Left ventricle myocardium superior (tissue), 1 donor: ENCODE measurements at regions of chr1 and their contacts with region 1.

Region 1: DNA sequence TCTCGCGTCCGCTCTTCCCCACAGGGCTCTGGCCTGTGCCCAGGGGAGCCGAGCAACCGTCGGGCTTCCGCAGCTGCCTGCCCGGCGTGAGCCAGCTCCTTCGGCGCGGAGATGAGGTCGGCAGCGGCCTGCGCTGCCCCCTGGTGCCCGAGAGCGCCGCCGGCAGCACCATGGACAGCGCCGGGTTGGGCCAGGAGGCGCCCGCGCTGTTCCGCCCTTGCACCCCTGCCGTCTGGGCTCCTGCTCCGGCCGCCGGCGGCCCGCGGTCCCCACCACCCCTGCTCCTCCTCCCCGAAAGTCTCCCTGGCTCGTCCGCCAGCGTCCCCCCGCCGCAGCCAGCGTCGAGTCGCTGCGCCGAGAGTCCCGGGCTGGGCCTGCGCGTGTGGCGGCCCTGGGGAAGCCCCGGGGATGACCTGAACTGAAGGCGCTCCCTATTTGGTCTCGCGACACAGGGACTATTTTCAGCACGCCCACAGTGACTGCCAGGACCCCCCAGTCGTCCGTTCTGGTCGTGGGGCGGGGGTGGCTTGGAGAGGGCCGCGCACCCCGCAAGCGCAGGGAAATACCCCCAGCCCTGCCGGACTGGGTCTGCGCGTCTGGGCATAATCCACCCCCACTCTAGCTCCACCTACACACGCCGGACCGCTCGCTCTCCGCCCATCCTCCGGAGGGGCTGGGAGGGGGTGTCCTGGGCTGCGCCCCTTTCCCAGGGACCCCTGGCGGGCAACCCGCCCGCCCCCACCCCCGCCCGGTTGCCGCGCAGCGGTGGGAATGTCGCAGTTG is 1.3 kb downstream of the HES3 start:
- DNase-seq: peak; percentile 90
- ATAC-seq: peak; percentile 80

Region 2: DNA sequence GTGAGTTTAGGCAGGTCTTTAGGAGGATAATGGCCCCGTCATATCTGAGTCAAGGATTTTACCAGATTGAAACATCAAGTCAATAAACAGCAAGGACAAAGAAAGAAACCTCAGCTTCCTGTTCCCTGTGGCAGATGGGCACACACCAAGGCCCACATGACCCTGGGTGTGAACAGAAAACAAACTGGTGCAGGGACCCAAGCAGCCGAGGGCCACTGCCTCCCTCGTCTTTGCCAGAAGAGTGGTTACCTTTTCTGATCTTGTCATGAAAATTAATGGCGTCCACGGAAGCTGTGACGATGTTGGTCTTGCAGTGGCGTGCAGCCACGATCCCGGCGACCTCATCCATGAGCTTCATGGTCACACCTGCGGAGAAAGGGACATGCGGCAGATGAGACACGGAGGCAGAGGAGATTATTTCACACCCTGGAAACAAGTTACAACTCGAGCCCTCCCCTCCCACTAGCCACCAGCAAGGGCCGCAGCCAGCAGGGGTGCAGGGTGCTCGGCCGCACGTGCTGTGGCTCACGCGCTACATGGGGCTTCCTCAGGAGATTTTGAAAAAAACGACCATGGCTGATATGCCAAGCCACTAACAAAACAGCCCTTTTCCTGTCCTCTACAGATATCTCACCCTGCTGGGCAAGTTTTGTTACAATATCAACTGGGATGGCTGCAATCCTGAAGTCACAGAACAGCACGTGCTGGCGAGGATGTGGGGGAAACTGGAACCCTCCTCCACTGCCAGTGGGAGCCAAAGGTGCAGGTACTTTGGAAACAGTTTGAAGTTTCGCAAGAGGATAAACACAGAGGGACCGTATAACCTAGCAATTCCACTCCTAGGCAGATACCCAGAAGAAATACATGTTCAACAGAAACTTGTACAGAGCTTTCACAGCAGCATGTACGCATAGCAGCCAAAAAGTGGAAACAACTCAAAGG is 49.6 kb after region 1 on chr1:
- intact Hi-C with region 1: no loop called
- DNase-seq: no peak
- ATAC-seq: no peak

Region 3: GRCh38 chr1:6343506-6344405 is 98.5 kb after region 1 on chr1:
- intact Hi-C with region 1: loop called (anchors 10 kb)
- DNase-seq: peak; percentile 79
- ATAC-seq: peak; percentile 85